CD4-positive, alpha-beta memory T cell (primary cell): ENCODE measurements at regions of chr11 and their contacts with region 1.

Region 1: GRCh38 chr11:129815596-129816461 is at the start of gene TMEM45B:
- DNase-seq: peak; percentile 34 to 50 (median 43)
- H3K4me3 ChIP-seq: peak within 1 kb of the TSS in 1 of 2 donors; percentile 33
- H3K4me3 Mint-ChIP-seq: peak within 1 kb of the TSS; percentile 86 to 93 (median 90)
- H3K27ac ChIP-seq: no peak within 1 kb of the TSS
- H3K27ac Mint-ChIP-seq: peak within 1 kb of the TSS; percentile 84 to 97 (median 94)
- H3K4me1 ChIP-seq: peaks cover 30% of the 10 kb centered on the region
- H3K4me1 Mint-ChIP-seq: peaks cover 34 to 71% (median 58%) of the 10 kb centered on the region in 4 donors
- H3K27me3 ChIP-seq: no peaks in the 10 kb centered on the region
- H3K27me3 Mint-ChIP-seq: peaks cover 0 to 14% of the 10 kb centered on the region in 2 donors
- total RNA-seq, gene TMEM45B: 30.8 to 34.4 TPM

Region 2: DNA sequence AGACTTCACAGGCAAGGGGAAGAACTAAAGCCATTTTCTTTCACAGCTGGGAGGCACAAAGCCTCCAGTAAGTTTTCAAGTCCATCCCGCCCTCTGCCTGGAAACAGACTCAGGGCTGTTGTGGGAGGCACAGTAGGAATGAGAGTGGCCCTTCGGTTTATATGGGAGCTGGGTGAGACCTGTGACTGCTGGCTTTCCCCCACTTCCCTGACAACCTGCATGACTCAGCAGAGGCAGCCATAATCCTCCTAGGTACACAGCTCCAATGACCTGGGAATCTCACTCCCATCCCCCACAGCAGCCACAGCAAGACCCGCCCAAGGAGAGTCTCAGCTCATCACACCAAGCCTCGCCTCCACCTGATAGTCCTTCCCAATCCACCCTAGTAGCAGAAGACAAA is 12.3 kb before region 1 on chr11:
- CTCF ChIA-PET with region 1: interaction called, 10 read pairs
- POLR2A ChIA-PET with region 1: interaction called, 56 read pairs
- intact Hi-C with region 1: no loop called
- DNase-seq: no peak
- H3K4me3 ChIP-seq: no peak overlapping the region
- H3K4me3 Mint-ChIP-seq: peak overlapping the region; percentile 36 to 80 (median 62)
- H3K27ac ChIP-seq: no peak overlapping the region
- H3K27ac Mint-ChIP-seq: peak overlapping the region; percentile 48 to 97 (median 79)
- H3K4me1 ChIP-seq: peaks cover 25% of the 10 kb centered on the region
- H3K4me1 Mint-ChIP-seq: peaks cover 32 to 74% (median 51%) of the 10 kb centered on the region in 4 donors
- H3K27me3 ChIP-seq: no peaks in the 10 kb centered on the region
- H3K27me3 Mint-ChIP-seq: peaks cover 3% of the 10 kb centered on the region in 2 donors

Region 3: DNA sequence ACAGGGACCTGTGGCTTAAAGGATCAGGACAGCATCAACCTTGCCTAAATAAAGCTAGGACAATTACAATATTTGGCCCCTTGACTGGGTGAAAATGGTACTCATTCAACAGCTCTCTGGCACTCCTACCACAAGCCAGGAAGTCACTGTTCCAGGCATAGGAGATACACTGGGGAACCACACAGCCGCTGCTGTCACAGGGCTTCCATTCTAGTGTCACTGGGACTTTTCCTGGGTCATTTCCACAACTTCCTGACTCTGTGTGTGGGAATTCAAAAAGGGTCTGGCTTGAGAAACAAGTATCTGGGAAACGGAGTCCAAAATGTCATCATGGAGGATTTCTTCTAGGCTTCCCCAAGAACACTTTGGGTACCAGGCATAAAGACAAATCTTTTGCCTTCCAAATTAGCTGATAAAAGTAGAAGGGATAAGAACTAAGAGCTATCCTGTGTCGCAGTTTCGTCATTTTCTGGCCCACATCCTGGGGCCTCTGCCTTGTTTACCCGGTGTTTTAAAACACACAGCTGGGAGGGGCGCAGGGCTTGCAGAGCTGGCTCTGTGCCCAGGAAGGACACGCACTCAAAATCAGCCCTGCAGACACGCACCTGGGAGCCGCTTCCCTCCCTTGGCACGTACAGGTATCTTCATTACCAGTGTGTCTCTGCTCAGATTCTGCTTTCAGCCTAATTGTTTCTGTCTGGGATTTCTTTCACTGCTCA is 37.8 kb after region 1 on chr11:
- CTCF ChIA-PET with region 1: no interaction called
- POLR2A ChIA-PET with region 1: interaction called, 108 read pairs
- intact Hi-C with region 1: loop called (anchors 1 kb)
- DNase-seq: peak; percentile 88 to 93 (median 90)
- H3K4me3 ChIP-seq: peak overlapping the region in 1 of 2 donors; percentile 28
- H3K4me3 Mint-ChIP-seq: peak overlapping the region; percentile 73 to 89 (median 82)
- H3K27ac ChIP-seq: peak overlapping the region; percentile 51
- H3K27ac Mint-ChIP-seq: peak overlapping the region; percentile 94 to 100 (median 99)
- H3K4me1 ChIP-seq: peaks cover 42% of the 10 kb centered on the region
- H3K4me1 Mint-ChIP-seq: peaks cover 38 to 62% (median 40%) of the 10 kb centered on the region in 4 donors
- H3K27me3 ChIP-seq: no peaks in the 10 kb centered on the region
- H3K27me3 Mint-ChIP-seq: no peaks in the 10 kb centered on the region

Region 4: DNA sequence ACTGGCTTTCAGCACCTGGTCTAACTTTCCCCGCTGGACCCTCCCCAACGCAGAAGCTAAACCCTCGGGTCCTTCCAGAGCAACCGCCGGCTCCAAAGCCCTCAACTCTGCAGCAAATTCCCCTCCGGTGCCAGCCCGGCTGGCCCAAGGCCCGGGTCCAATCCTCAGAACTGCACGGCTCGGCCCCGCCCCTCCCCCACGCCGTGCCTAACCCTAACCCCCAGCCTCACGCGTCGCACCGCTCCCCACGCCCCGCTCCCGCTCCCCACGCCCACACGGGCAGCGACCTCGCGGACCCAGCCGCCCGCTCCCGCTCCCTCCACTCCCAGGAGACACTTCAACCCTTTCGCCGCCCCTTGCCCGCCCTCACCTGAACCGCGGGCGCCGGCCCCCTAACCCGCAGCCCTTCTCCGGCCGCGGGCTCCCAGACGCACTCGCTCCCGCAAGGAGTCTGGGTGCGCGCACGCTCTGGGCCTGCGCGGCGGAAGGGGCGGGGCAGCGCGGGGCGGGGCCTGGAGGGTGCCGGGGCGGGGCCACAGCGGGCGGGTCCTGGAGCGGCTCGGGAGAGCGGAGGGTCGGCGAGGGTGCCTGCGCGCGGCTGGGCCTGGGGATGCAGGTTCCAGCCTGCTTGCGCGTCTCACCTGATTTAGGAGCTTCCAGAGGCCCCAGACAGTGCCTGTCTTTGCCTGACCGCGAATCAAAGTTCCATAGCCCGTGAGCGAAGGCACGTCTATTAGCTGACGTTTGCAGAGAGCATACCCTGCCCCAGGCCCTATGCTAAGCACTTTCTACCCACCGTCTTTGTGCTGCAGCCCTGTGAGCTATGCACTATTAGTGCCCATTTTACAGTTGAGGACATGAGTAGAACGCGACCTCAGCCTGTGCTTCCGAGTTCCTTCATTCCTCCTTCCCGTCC is 79.6 kb after region 1 on chr11 and contains the start of gene NFRKB:
- CTCF ChIA-PET with region 1: no interaction called
- POLR2A ChIA-PET with region 1: interaction called, 18 read pairs
- intact Hi-C with region 1: loop called (anchors 1 kb)
- DNase-seq: peak; percentile 81 to 89 (median 84)
- H3K4me3 ChIP-seq: peak within 1 kb of the TSS; percentile 61 to 84
- H3K4me3 Mint-ChIP-seq: peak within 1 kb of the TSS; percentile 92 to 94 (median 94)
- H3K27ac ChIP-seq: peak within 1 kb of the TSS; percentile 81
- H3K27ac Mint-ChIP-seq: peak within 1 kb of the TSS; percentile 82 to 93 (median 90)
- H3K4me1 ChIP-seq: peaks cover 29% of the 10 kb centered on the region
- H3K4me1 Mint-ChIP-seq: peaks cover 20 to 51% (median 33%) of the 10 kb centered on the region in 4 donors
- H3K27me3 ChIP-seq: no peaks in the 10 kb centered on the region
- H3K27me3 Mint-ChIP-seq: no peaks in the 10 kb centered on the region
- total RNA-seq, gene NFRKB: 91.9 to 94.9 TPM